H1 (cell line): ENCODE measurements at regions of chr1 and their contacts with region 1.

Region 1: DNA sequence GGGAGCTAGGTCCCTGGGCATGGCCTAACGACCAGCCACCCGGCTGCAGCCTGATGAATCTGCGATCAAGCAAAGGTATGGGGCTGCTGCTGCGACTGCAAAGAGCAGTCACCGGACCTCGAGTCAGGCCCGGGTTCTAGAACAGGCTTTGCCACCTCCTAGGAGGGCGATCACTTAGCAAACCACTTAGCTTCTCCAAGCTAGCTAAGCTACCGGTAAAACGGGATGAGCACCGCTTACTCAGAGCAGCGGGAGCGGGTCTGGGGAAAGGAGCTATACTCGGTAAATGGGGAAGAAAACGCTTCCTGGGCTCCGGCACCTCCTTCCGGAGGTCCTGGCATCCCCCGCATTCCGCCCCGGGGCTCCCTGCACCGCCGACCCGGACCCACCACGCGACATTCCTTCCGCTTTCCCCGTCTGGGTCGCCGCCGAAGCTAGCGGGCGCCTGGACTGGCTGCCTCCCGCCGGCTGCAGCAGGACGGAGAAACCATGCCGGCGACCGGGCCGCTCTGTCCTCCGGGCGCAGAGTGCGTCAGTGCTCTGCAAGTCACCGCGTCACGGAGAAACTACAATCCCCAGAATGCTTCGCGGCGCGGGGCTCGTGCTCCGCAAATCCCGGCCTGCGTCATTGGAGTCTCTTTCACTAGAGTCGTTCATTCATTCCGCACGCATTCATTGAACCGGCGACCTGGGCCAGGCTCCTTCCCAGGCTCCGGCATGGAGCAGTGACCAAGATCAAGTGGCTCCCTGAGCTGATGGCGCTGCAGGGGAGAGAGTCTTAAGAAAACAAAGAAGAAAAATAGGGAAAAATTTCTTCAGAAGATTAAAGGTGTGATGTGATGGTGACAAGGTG is at the start of gene LSM10:
- DNase-seq: peak; percentile 73 to 94
- H3K4me3 ChIP-seq: peak within 1 kb of the TSS; percentile 73 to 87 (median 78)
- H3K27ac ChIP-seq: 0 out of 2 replicates have a peak within 1 kb of the TSS, but pooled peaks have one; percentile 25
- H3K4me1 ChIP-seq: peaks cover 0 to 12% (median 11%) of the 10 kb centered on the region in 4 experiments; a peak in 5 of 7 replicates
- H3K27me3 ChIP-seq: no peaks in the 10 kb centered on the region
- CTCF ChIP-seq: peak in 1 of 3 experiments; percentile 0; a peak in 1 of 4 replicates
- EP300 ChIP-seq: no peak
- POLR2A ChIP-seq: peak; percentile 27 to 82
- RAD21 ChIP-seq: no peak
- total RNA-seq, gene LSM10: 59.1 and 59.5 TPM in 2 replicates

Region 2: GRCh38 chr1:36323597-36324352 is 73.8 kb before region 1 on chr1 and contains the start of gene EVA1B:
- CTCF ChIA-PET with region 1: no interaction called
- POLR2A ChIA-PET with region 1: interaction called, 36 read pairs
- DNase-seq: peak in 1 of 2 experiments; percentile 79
- H3K4me3 ChIP-seq: peak within 1 kb of the TSS; percentile 27 to 67 (median 49)
- H3K27ac ChIP-seq: no peak within 1 kb of the TSS
- H3K4me1 ChIP-seq: peaks cover 0 to 28% (median 16%) of the 10 kb centered on the region in 4 experiments; a peak in 6 of 7 replicates
- H3K27me3 ChIP-seq: peaks cover 0 to 39% (median 20%) of the 10 kb centered on the region in 4 experiments; a peak in 5 of 7 replicates
- CTCF ChIP-seq: no peak
- EP300 ChIP-seq: no peak
- POLR2A ChIP-seq: no peak; a peak in 1 of 3 replicates
- RAD21 ChIP-seq: no peak
- total RNA-seq, gene EVA1B: 10.0 and 10.3 TPM in 2 replicates